ENCODE measurements at regions of chr6 and their contacts with region 1.

Region 1: DNA sequence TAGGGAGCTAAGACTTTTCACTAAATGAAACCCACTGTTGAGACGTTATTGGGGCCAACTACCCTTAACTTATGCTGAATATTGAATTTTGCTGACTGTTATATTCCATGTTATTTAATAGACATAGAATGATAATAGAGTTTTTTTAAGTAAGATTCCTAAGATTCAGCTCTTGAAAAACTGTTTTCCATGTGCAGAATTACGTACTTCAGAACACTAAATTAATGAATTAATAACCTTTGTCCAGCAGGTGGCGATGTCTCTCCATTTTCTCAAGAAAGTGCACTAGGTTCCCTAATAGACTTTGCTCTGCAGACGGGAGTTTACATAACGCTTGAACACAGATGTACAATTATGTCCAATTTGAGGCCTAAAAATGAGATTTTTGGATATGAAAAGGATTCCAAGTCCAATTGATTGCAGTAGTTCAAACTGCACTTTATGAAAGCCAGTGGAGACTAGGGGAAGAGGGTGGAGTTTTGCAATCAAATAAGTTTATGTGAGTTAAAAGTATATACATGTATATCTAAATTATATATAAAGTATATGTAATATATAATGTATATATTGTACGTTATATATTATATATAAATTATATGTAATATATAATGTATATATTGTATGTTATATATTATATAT is 282.1 kb downstream of the UST start:
- DNase-seq: peak; percentile 92 to 97 (median 94)
- H3K4me3 ChIP-seq: no peak overlapping the region
- H3K27ac ChIP-seq: no peak overlapping the region
- H3K4me1 ChIP-seq: peaks cover 1 to 30% (median 26%) of the 10 kb centered on the region in 4 experiments
- H3K27me3 ChIP-seq: no peaks in the 10 kb centered on the region

Region 2: GRCh38 chr6:148530394-148530953 is 498.4 kb before region 1 on chr6:
- CTCF ChIA-PET with region 1: no interaction called
- POLR2A ChIA-PET with region 1: no interaction called
- DNase-seq: peak; percentile 29 to 75 (median 70)
- H3K4me3 ChIP-seq: peak overlapping the region in 5 of 7 experiments; percentile 36 to 70 (median 45)
- H3K27ac ChIP-seq: no peak overlapping the region
- H3K4me1 ChIP-seq: peaks cover 0 to 7% (median 0%) of the 10 kb centered on the region in 4 experiments
- H3K27me3 ChIP-seq: peaks cover 0 to 5% (median 0%) of the 10 kb centered on the region in 5 experiments

Region 3: DNA sequence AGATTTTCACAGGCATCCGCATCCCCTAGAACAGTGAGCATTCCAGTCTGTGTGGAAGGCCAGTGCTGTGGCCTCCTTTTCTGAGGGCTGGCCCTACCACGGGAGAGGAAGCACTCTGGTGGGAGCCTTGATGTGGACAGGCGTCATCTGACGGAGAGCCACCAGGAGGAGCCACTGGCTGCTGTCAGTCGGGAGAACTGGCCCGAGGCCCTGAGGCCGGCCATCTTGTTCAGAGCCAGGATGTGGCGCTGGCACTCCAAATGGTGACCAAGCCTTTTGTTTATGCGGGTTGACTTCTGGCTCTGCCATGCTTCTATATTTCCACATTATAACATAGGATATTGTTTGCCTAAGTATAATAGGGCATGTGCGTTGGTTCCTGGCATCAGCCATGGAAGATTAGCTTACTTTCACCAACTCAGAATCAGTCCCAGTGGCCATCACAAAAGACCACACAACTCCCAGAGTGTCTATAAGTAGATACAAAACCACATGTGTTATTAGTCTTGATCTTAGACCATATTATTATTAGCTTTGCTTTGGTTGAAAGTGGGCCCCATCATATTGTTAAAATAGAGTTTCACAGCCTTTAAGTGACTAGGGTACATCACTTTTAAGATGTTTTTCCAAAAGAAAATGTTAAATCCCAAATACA is 14.7 kb after region 1 on chr6:
- CTCF ChIA-PET with region 1: interaction called, 39 read pairs
- POLR2A ChIA-PET with region 1: no interaction called
- DNase-seq: peak in 1 of 3 donors; percentile 36
- H3K4me3 ChIP-seq: no peak overlapping the region
- H3K27ac ChIP-seq: no peak overlapping the region
- H3K4me1 ChIP-seq: peaks cover 9 to 30% (median 16%) of the 10 kb centered on the region in 4 experiments
- H3K27me3 ChIP-seq: no peaks in the 10 kb centered on the region

Region 4: DNA sequence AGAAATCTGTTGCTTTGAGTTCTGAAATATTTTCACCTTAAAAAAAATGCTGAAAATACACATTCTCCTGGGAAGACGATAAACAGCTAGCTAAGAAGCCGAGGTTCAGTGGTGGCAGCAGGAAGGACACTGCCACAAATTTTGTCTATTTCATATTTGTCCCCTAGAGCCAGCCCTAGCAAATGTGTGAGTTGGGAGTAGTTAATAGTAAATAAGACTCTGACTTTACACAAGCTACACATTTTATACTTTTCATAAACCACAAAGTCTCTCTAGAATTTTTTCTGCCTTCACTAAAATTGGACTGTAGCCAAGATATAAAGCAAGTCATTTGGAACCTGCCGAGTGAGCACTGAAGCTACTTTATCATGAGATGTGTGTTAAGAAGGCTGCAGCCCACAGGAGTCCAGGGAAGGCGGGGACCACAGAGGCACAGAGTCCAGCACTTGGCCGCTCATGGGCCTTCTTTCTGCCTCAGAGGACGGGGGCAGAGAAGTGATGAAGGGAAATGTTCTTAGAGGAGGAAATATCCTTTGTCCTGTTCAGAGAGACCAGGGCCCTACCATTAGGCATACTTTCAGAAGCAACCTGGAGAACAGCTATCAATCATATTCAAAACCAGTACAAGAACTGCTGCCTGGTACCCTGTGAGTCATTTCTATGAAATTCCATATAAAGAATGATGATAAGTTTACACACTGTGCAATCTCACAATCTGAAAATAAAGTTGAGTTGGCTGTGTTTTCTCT is 46.9 kb after region 1 on chr6:
- CTCF ChIA-PET with region 1: interaction called, 10 read pairs
- POLR2A ChIA-PET with region 1: interaction called, 3 read pairs
- DNase-seq: peak in 2 of 3 donors; percentile 62 to 68
- H3K4me3 ChIP-seq: no peak overlapping the region
- H3K27ac ChIP-seq: no peak overlapping the region
- H3K4me1 ChIP-seq: peaks cover 5 to 24% (median 16%) of the 10 kb centered on the region in 4 experiments
- H3K27me3 ChIP-seq: no peaks in the 10 kb centered on the region

Region 5: GRCh38 chr6:149513915-149514314 is 485.0 kb after region 1 on chr6:
- CTCF ChIA-PET with region 1: interaction called, 50 read pairs
- POLR2A ChIA-PET with region 1: no interaction called
- DNase-seq: no peak
- H3K4me3 ChIP-seq: no peak overlapping the region
- H3K27ac ChIP-seq: no peak overlapping the region
- H3K4me1 ChIP-seq: peaks cover 0 to 2% (median 0%) of the 10 kb centered on the region in 4 experiments
- H3K27me3 ChIP-seq: no peaks in the 10 kb centered on the region

Measured in common myeloid progenitor, CD34-positive (primary cell).